ENCODE measurements at regions of chr12 and their contacts with region 1.

Region 1: GRCh38 chr12:10033783-10034545 is 3.5 kb downstream of the CLEC9A start:
- DNase-seq: no peak
- ATAC-seq: no peak
- H3K4me3 ChIP-seq: no peak overlapping the region
- H3K4me3 Mint-ChIP-seq: no peak overlapping the region
- H3K27ac ChIP-seq: no peak overlapping the region
- H3K27ac Mint-ChIP-seq: no peak overlapping the region
- H3K4me1 ChIP-seq: no peaks in the 10 kb centered on the region
- H3K4me1 Mint-ChIP-seq: no peaks in the 10 kb centered on the region
- H3K27me3 ChIP-seq: no peaks in the 10 kb centered on the region
- H3K27me3 Mint-ChIP-seq: peaks cover 0 to 22% (median 4%) of the 10 kb centered on the region in 5 donors

Region 2: GRCh38 chr12:9509464-9510166 is 524.3 kb before region 1 on chr12:
- CTCF ChIA-PET with region 1: no interaction called
- POLR2A ChIA-PET with region 1: no interaction called
- intact Hi-C with region 1: no loop called
- DNase-seq: no peak
- ATAC-seq: no peak
- H3K4me3 ChIP-seq: no peak overlapping the region
- H3K4me3 Mint-ChIP-seq: no peak overlapping the region
- H3K27ac ChIP-seq: no peak overlapping the region
- H3K27ac Mint-ChIP-seq: peak overlapping the region in 3 of 9 donors; percentile 44 to 84 (median 73)
- H3K4me1 ChIP-seq: no peaks in the 10 kb centered on the region
- H3K4me1 Mint-ChIP-seq: peaks cover 0 to 22% (median 11%) of the 10 kb centered on the region in 7 donors
- H3K27me3 ChIP-seq: no peaks in the 10 kb centered on the region
- H3K27me3 Mint-ChIP-seq: no peaks in the 10 kb centered on the region

Region 3: GRCh38 chr12:9792961-9793617 is 240.9 kb before region 1 on chr12:
- CTCF ChIA-PET with region 1: no interaction called
- POLR2A ChIA-PET with region 1: no interaction called
- intact Hi-C with region 1: no loop called
- DNase-seq: no peak
- ATAC-seq: no peak
- H3K4me3 ChIP-seq: no peak overlapping the region
- H3K4me3 Mint-ChIP-seq: peak overlapping the region in 4 of 10 donors; percentile 4 to 78 (median 70)
- H3K27ac ChIP-seq: no peak overlapping the region
- H3K27ac Mint-ChIP-seq: peak overlapping the region in 4 of 9 donors; percentile 52 to 86 (median 78)
- H3K4me1 ChIP-seq: peaks cover 42 to 43% of the 10 kb centered on the region in 2 donors
- H3K4me1 Mint-ChIP-seq: peaks cover 40 to 70% (median 57%) of the 10 kb centered on the region in 7 donors
- H3K27me3 ChIP-seq: no peaks in the 10 kb centered on the region
- H3K27me3 Mint-ChIP-seq: no peaks in the 10 kb centered on the region

Region 4: DNA sequence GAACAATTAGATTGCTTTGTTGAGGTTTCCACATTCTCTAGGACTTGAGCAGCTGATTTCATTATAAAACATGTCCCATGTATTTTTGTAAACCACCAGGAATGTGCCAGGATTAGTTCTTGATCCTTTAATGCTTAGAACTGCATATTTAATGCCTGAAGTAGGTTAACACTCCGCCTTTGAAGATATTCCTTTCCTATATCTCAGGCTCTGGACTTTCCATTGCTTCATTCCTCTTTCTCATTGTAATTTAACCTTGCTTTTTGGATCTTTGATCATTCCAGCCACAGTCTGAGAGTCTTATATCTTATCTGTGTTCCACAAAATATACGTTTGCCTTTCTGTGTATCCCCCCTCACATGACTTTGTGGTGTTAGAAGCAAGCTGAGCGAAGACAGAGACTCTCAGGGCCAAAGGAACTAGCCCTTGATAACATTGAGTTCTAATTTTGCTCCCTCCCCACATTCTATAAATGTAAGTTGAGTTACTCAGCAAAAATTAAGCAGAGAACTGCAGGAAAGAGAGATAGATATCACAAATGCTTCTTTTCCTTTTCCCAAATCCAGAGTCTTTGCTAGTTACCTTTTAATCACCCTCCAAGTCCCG is 32.7 kb before region 1 on chr12:
- CTCF ChIA-PET with region 1: no interaction called
- POLR2A ChIA-PET with region 1: no interaction called
- intact Hi-C with region 1: loop called in 1 of 2 experiments (anchors 2 kb)
- DNase-seq: no peak
- ATAC-seq: no peak
- H3K4me3 ChIP-seq: no peak overlapping the region
- H3K4me3 Mint-ChIP-seq: no peak overlapping the region
- H3K27ac ChIP-seq: no peak overlapping the region
- H3K27ac Mint-ChIP-seq: no peak overlapping the region
- H3K4me1 ChIP-seq: no peaks in the 10 kb centered on the region
- H3K4me1 Mint-ChIP-seq: peaks cover 0 to 5% (median 0%) of the 10 kb centered on the region in 7 donors
- H3K27me3 ChIP-seq: no peaks in the 10 kb centered on the region
- H3K27me3 Mint-ChIP-seq: peaks cover 0 to 51% (median 0%) of the 10 kb centered on the region in 5 donors

Region 5: GRCh38 chr12:10052193-10052913 is 18.4 kb after region 1 on chr12:
- CTCF ChIA-PET with region 1: no interaction called
- POLR2A ChIA-PET with region 1: no interaction called
- intact Hi-C with region 1: no loop called
- DNase-seq: no peak
- ATAC-seq: no peak
- H3K4me3 ChIP-seq: no peak overlapping the region
- H3K4me3 Mint-ChIP-seq: peak overlapping the region in 1 of 10 donors; percentile 1
- H3K27ac ChIP-seq: no peak overlapping the region
- H3K27ac Mint-ChIP-seq: no peak overlapping the region
- H3K4me1 ChIP-seq: no peaks in the 10 kb centered on the region
- H3K4me1 Mint-ChIP-seq: peaks cover 5 to 8% (median 7%) of the 10 kb centered on the region in 7 donors
- H3K27me3 ChIP-seq: no peaks in the 10 kb centered on the region
- H3K27me3 Mint-ChIP-seq: peaks cover 11 to 47% (median 29%) of the 10 kb centered on the region in 5 donors

Region 6: DNA sequence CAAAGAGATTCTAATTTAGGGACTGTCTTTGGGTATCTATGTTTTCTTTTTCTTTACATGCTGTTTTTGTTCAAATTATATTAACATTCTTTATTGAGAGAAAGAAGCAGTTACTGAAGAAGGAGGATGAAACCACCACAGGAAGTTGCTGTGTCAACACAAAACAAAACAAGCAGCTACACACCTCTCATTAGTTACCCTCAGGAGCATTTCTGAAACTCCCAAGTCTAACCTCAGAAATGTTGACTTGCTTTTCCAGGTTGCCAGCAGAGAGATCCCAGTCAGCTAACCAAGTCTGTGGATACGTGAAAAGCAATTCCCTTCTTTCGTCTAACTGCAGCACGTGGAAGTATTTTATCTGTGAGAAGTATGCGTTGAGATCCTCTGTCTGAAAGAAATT is 31.3 kb after region 1 on chr12:
- CTCF ChIA-PET with region 1: no interaction called
- POLR2A ChIA-PET with region 1: no interaction called
- intact Hi-C with region 1: no loop called
- DNase-seq: no peak
- ATAC-seq: no peak
- H3K4me3 ChIP-seq: no peak overlapping the region
- H3K4me3 Mint-ChIP-seq: no peak overlapping the region
- H3K27ac ChIP-seq: no peak overlapping the region
- H3K27ac Mint-ChIP-seq: no peak overlapping the region
- H3K4me1 ChIP-seq: no peaks in the 10 kb centered on the region
- H3K4me1 Mint-ChIP-seq: peaks cover 0 to 6% (median 0%) of the 10 kb centered on the region in 7 donors
- H3K27me3 ChIP-seq: no peaks in the 10 kb centered on the region
- H3K27me3 Mint-ChIP-seq: peaks cover 9 to 57% (median 18%) of the 10 kb centered on the region in 5 donors

Region 7: GRCh38 chr12:10140001-10140400 is 106.0 kb after region 1 on chr12:
- CTCF ChIA-PET with region 1: no interaction called
- POLR2A ChIA-PET with region 1: no interaction called
- intact Hi-C with region 1: loop called in 1 of 2 experiments (anchors 1 kb)
- DNase-seq: peak in 7 of 9 donors; percentile 26 to 66 (median 49)
- ATAC-seq: peak; percentile 72
- H3K4me3 ChIP-seq: no peak overlapping the region
- H3K4me3 Mint-ChIP-seq: no peak overlapping the region
- H3K27ac ChIP-seq: no peak overlapping the region
- H3K27ac Mint-ChIP-seq: no peak overlapping the region
- H3K4me1 ChIP-seq: no peaks in the 10 kb centered on the region
- H3K4me1 Mint-ChIP-seq: peaks cover 0 to 3% (median 0%) of the 10 kb centered on the region in 7 donors
- H3K27me3 ChIP-seq: no peaks in the 10 kb centered on the region
- H3K27me3 Mint-ChIP-seq: peaks cover 0 to 51% (median 0%) of the 10 kb centered on the region in 5 donors

Measured in naive thymus-derived CD4-positive, alpha-beta T cell (primary cell).